ENCODE measurements at regions of chr15 and their contacts with region 1.

Region 1: GRCh38 chr15:42072141-42072685 is 22.1 kb downstream of the PLA2G4D start:
- DNase-seq: peak; percentile 33
- ATAC-seq: no peak
- H3K4me3 Mint-ChIP-seq: no peak overlapping the region
- H3K27ac Mint-ChIP-seq: no peak overlapping the region
- H3K4me1 Mint-ChIP-seq: no peaks in the 10 kb centered on the region
- H3K27me3 Mint-ChIP-seq: no peaks in the 10 kb centered on the region

Region 2: DNA sequence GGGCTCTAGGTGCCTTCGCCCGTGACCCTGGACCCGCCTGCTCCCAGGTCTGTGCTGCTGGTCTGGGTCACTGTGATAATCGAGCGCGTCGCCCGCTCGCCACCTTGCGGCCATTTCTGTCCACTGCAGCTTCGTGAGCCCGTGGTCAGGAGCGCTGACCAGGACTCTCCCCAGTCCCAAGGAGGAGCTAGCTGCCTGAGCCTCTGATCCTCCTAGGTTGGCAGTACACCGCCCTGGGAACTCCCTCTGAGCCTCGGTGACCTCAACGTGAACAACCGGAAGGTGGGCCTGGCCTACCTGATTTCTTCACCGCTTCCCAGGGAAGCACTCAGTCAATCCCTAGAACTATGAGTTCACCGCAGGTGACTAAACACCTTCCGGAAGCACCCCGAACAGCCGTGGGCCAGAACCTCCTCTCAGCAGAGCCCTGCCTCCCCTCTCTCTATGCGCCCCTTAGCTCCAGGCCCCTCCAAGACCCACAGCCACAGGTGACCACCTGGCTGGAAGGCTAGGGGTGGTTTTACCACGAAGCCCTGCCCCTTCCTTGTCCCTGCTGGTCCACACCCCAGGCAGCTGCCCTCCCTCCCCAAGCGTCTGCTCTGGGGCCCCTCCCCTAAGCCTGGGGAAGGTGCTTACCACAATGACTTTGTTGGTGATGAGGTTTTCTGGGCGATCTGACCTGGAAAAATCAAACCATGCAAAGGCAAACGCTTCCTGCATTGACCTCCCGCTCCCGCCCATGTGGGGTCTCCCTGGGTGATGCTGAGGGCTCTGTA is 12.4 kb after region 1 on chr15:
- CTCF ChIA-PET with region 1: interaction called, 16 read pairs
- DNase-seq: peak; percentile 52
- ATAC-seq: peak; percentile 76
- H3K4me3 Mint-ChIP-seq: no peak overlapping the region
- H3K27ac Mint-ChIP-seq: no peak overlapping the region
- H3K4me1 Mint-ChIP-seq: peaks cover 8% of the 10 kb centered on the region
- H3K27me3 Mint-ChIP-seq: peaks cover 23% of the 10 kb centered on the region

Measured in activated CD8-positive, alpha-beta memory T cell treated with anti-CD3 and anti-CD28 coated beads, Interleukin-2, amount 10 ng/mL, durations not matched to agents 7 days and 5 days (primary cell).